Activated naive CD4-positive, alpha-beta T cell treated with anti-CD3 and anti-CD28 coated beads for 36 hours (primary cell): ENCODE measurements at regions of chr10 and their contacts with region 1.

Region 1: DNA sequence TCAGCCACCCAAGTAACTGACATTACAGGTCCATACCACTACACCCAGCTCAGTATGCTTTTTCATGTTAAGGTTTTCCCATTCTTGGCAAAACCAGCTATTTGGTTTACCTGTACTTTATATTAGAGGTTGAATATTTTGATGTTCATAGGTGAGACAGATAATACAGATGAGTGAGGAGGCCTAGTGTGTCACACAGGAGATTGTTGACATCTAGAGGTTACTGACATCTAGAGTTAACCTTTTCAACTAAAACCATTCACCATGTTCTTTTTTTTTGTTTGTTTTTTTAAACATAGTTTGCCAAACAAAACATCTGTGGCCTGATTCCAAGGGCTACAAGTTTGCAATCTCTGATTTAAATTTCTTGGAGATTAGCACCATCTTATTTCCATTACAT is 8.0 kb downstream of the GHITM start:
- DNase-seq: no peak
- H3K4me3 Mint-ChIP-seq: no peak overlapping the region
- H3K27ac Mint-ChIP-seq: no peak overlapping the region
- H3K4me1 Mint-ChIP-seq: peaks cover 24% of the 10 kb centered on the region
- H3K27me3 Mint-ChIP-seq: no peaks in the 10 kb centered on the region

Region 2: DNA sequence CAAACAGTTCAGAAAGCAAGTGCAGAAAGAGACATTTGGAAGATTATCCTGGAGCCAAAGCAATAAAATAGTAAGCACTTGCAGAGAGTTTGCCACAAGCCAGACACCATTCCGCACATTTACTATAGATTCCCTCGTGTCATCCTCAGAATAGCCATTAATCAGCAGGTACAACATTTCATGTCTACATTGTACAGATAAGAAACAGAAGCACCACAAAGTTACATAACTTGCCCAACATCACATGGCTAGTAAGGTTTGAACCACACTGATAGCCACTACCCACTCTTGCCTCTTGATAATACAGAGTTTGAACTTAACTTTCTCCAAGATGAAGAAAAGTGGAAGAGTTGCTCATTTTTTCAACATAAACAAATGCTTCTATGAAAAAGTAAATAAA is 48.7 kb before region 1 on chr10:
- CTCF ChIA-PET with region 1: no interaction called
- intact Hi-C with region 1: no loop called
- DNase-seq: no peak
- H3K4me3 Mint-ChIP-seq: no peak overlapping the region
- H3K27ac Mint-ChIP-seq: no peak overlapping the region
- H3K4me1 Mint-ChIP-seq: no peaks in the 10 kb centered on the region
- H3K27me3 Mint-ChIP-seq: no peaks in the 10 kb centered on the region

Region 3: DNA sequence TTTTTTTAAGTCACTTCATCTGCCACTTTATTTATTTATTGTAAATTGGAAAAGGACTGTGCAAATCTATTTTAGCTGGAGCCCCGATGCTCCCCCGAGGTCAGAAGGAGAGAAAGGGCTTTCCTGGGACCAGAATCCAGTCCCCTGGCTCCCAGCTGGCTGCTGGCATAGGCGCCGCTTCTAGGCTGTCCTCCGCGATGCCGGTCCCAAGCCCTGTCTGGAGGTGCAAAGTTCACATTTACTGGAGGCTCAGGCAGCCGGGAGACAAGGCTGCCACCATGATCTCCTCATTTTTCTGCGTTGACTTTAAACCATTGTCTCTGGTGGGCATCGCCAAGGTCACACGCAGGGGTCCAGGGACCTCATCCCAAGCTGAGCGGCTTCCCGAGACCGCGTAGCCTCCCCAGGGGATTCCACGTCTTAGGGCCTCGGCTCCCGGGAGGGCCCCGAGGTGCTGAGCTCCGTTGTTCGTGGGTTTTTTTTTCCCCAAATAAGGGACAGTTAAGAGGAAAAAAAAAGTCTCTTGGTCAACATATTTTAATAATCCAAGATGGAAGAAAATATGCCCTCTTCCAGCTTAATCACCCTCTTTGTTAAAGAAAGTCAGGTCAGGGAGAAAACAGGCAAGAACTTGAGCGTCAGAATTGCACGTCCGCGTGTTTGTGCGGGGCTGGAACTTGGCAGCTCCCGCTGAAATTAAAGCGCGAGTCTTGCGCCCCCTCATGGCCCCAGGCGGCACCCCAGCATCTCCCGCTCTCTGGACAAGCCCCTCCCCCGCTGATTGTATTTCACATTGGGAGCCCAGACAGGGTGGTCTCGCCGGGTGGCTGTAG is 109.4 kb after region 1 on chr10:
- CTCF ChIA-PET with region 1: interaction called, 9 read pairs
- intact Hi-C with region 1: loop called (anchors 2 kb)
- DNase-seq: peak; percentile 73
- H3K4me3 Mint-ChIP-seq: no peak overlapping the region
- H3K27ac Mint-ChIP-seq: no peak overlapping the region
- H3K4me1 Mint-ChIP-seq: peaks cover 7% of the 10 kb centered on the region
- H3K27me3 Mint-ChIP-seq: peaks cover 19% of the 10 kb centered on the region

Region 4: DNA sequence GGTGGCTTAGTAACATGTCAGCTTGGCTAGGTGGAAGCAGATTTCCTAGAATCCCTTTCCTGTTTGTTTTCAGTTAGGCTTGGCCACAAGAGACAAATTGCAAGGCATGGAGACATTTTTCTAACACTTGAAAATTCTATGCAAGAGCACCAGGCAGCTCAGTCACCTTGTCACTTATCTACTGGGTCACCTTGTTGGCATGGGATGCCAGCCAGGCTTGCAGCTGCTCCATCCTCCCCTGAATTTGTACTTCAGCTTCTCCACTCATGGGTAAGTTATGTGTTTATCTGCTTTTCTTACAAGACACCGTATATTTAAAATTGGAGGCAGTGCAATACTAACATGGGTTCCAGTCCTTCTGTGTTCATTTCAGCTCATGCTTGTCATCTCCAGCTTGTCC is 140.8 kb after region 1 on chr10:
- CTCF ChIA-PET with region 1: no interaction called
- intact Hi-C with region 1: no loop called
- DNase-seq: no peak
- H3K4me3 Mint-ChIP-seq: no peak overlapping the region
- H3K27ac Mint-ChIP-seq: no peak overlapping the region
- H3K4me1 Mint-ChIP-seq: peaks cover under 1% of the 10 kb centered on the region
- H3K27me3 Mint-ChIP-seq: peaks cover 2% of the 10 kb centered on the region

Region 5: GRCh38 chr10:84348860-84349259 is 201.5 kb after region 1 on chr10:
- CTCF ChIA-PET with region 1: no interaction called
- intact Hi-C with region 1: no loop called
- DNase-seq: no peak
- H3K4me3 Mint-ChIP-seq: no peak overlapping the region
- H3K27ac Mint-ChIP-seq: no peak overlapping the region
- H3K4me1 Mint-ChIP-seq: peaks cover 58% of the 10 kb centered on the region
- H3K27me3 Mint-ChIP-seq: no peaks in the 10 kb centered on the region

Region 6: DNA sequence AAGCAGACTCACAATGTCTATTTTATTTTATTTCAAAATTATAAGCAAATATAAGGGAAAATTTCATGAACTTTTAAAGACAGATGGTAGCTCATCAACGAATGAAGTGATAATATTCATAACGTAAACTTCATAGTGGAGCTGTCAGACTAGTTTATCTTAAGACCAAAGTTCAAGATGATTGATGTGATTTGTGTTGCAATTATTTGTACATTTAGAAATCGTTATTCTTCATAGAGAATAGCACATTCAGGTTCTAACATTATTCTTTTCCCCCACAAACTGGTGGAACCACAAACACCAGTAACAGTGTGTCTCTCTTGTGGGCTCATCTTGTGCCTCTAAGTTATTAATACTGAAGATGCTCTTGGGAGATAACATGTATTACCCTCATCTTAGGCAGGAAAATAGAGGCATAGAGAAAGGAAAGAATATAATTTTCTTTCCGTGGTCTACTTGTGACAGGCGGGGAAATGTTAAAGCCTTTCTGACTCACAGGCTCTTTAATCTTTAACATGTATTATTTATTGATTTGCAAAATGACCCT is 218.1 kb after region 1 on chr10:
- CTCF ChIA-PET with region 1: no interaction called
- intact Hi-C with region 1: no loop called
- DNase-seq: no peak
- H3K4me3 Mint-ChIP-seq: no peak overlapping the region
- H3K27ac Mint-ChIP-seq: no peak overlapping the region
- H3K4me1 Mint-ChIP-seq: peaks cover 64% of the 10 kb centered on the region
- H3K27me3 Mint-ChIP-seq: no peaks in the 10 kb centered on the region